ENCODE measurements at regions of chr2 and their contacts with region 1.

Region 1: DNA sequence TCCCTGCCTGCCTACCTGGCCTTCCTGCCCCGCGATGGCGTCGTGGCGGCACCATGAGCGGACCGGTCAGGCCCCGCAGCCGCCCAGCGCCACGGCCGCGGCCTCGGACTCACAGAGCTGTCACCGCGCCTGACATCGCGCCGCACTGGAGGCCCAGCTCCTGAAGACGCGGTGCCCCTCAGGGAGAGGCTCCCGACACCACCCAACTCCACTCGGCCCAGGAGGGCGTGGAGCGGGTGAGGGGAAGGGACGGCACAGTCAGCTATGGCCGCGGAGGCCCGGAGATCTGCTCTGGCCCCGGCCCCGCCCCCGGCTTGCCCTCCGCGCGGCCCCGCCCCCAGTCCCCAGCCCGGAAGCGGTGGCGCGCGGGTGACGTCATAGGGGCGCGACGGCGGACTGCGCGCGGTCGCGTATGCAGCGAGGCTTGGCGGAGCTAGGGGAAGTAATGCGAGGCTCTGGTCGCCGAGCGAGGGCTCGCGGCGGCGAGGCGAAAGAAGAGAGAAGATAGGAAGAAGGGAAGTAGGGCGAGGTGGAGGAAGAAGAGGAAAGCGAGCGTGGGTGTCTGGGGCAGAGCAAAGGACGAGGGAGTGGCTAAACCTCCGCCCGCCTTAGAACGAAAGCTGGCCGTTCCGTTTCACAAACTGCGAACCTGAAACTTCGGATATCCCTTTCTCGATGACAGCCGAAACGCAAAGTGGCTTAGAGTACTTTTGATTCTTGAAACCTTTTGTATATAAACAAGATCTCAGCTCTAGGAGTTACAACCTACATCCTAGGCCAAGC is at the start of gene SLC35F5:
- DNase-seq: peak; percentile 89
- H3K4me3 Mint-ChIP-seq: peak within 1 kb of the TSS; percentile 98
- H3K27ac Mint-ChIP-seq: peak within 1 kb of the TSS; percentile 99
- H3K4me1 Mint-ChIP-seq: peaks cover 17% of the 10 kb centered on the region
- H3K27me3 Mint-ChIP-seq: no peaks in the 10 kb centered on the region
- total RNA-seq, gene SLC35F5: 12.1 to 13.7 TPM

Region 2: GRCh38 chr2:112096098-112096497 is 1660.4 kb before region 1 on chr2:
- CTCF ChIA-PET with region 1: no interaction called
- intact Hi-C with region 1: no loop called
- DNase-seq: no peak
- H3K4me3 Mint-ChIP-seq: no peak overlapping the region
- H3K27ac Mint-ChIP-seq: no peak overlapping the region
- H3K4me1 Mint-ChIP-seq: peaks cover 17% of the 10 kb centered on the region
- H3K27me3 Mint-ChIP-seq: no peaks in the 10 kb centered on the region

Region 3: GRCh38 chr2:113692698-113693428 is 63.7 kb before region 1 on chr2:
- CTCF ChIA-PET with region 1: no interaction called
- intact Hi-C with region 1: loop called (anchors 1 kb)
- DNase-seq: peak; percentile 57
- H3K4me3 Mint-ChIP-seq: peak overlapping the region; percentile 6
- H3K27ac Mint-ChIP-seq: peak overlapping the region; percentile 77
- H3K4me1 Mint-ChIP-seq: peaks cover 34% of the 10 kb centered on the region
- H3K27me3 Mint-ChIP-seq: no peaks in the 10 kb centered on the region

Region 4: DNA sequence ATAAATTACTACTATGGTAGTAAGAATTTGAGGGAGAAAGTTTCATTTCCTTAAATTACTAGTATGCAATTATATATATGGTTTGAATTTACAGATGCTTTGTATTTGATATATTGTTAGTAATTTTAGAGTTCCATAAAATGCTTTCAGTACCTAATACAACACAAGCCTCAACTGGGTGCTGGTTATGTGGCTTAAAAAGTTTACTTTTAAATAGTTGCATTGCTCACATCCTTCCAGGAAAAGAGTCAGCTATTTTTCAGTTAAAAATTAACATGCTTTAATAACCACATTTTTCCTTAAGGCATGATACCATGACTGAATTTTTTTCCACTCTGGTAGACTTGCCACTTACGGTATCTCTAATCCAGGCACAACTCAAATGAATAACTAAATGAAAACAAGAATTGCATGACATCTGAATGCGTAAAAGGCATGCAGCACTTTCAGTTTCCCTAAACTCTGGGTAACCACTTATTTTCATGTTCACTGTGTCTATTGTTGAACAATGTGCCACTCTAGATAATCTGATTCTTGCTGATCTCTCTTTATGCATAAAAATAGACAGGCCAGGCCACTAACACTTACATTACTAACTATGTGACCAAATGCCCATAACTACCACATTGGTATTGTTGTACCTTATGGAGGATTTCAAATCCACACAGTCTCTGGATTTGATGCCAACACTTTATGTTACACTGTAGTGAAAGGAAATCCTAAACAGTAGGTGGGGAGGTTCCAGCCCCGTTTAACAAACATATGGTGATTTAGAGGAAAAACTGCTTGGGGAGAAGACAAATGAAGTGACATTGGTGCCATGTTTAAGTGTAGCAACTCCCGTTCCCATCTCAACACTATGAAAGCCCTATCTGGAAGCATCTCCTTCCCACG is 35.4 kb after region 1 on chr2:
- CTCF ChIA-PET with region 1: interaction called, 4 read pairs
- intact Hi-C with region 1: loop called (anchors 1 kb)
- DNase-seq: peak; percentile 59
- H3K4me3 Mint-ChIP-seq: peak overlapping the region; percentile 26
- H3K27ac Mint-ChIP-seq: peak overlapping the region; percentile 94
- H3K4me1 Mint-ChIP-seq: peaks cover 36% of the 10 kb centered on the region
- H3K27me3 Mint-ChIP-seq: no peaks in the 10 kb centered on the region

Region 5: GRCh38 chr2:113823716-113824595 is 67.4 kb after region 1 on chr2:
- CTCF ChIA-PET with region 1: no interaction called
- intact Hi-C with region 1: no loop called
- DNase-seq: no peak
- H3K4me3 Mint-ChIP-seq: no peak overlapping the region
- H3K27ac Mint-ChIP-seq: no peak overlapping the region
- H3K4me1 Mint-ChIP-seq: no peaks in the 10 kb centered on the region
- H3K27me3 Mint-ChIP-seq: no peaks in the 10 kb centered on the region

Region 6: DNA sequence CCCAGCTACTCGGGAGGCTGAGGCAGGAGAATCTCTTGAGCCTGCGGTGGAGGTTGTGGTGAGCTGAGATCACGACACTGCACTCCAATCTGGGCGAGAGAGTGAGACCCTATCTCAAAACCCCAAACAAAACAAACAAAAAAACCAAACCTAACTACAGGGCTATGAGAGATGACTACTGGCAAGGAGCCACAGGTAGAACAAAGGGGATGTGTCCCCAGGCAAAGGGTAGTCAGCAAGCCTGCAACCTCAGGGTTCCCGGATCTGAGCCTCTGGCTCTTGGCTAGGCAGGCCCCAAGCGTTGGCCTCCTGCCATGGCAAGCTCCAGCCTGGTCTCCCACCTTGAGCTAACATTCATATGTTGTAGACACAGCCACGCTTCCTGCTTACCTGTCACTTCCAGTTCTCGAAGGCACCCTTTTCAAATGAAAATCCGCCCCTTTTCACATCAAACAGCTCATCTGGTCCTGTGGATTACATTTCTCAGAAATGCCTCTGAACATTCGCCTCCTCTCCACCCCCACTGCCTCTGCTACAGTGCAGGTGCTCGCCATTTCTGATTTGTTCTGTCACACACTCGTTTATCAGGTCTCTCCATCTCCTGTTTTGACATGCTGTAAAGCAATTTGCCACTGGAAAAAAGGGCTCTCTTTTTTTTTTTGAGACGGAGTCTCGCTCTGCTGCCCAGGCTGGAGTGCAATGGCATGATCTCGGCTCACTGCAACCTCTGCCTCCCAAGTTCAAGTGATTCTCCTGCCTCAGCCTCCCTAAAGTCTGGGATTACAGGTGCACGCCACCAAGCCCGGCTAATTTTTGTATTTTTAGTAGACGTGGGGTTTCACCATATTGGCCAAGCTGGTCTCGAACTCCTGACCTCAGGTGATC is 120.2 kb after region 1 on chr2:
- CTCF ChIA-PET with region 1: no interaction called
- intact Hi-C with region 1: loop called (anchors 1 kb)
- DNase-seq: peak; percentile 95
- H3K4me3 Mint-ChIP-seq: peak overlapping the region; percentile 50
- H3K27ac Mint-ChIP-seq: peak overlapping the region; percentile 85
- H3K4me1 Mint-ChIP-seq: peaks cover 52% of the 10 kb centered on the region
- H3K27me3 Mint-ChIP-seq: no peaks in the 10 kb centered on the region

Region 7: GRCh38 chr2:114001152-114001551 is 244.6 kb after region 1 on chr2:
- CTCF ChIA-PET with region 1: no interaction called
- intact Hi-C with region 1: no loop called
- DNase-seq: no peak
- H3K4me3 Mint-ChIP-seq: no peak overlapping the region
- H3K27ac Mint-ChIP-seq: no peak overlapping the region
- H3K4me1 Mint-ChIP-seq: no peaks in the 10 kb centered on the region
- H3K27me3 Mint-ChIP-seq: no peaks in the 10 kb centered on the region